Endothelial cell of umbilical vein (primary cell): ENCODE measurements at regions of chr2 and their contacts with region 1.

Region 1: GRCh38 chr2:10709290-10709939 is 12.0 kb upstream of the ATP6V1C2 start:
- DNase-seq: peak; percentile 38
- H3K4me3 ChIP-seq: no peak overlapping the region
- H3K27ac ChIP-seq: no peak overlapping the region
- H3K4me1 ChIP-seq: peaks cover 5% of the 10 kb centered on the region
- H3K27me3 ChIP-seq: peaks cover 3 to 6% of the 10 kb centered on the region in 2 experiments
- CTCF ChIP-seq: peak in 1 of 2 donors; percentile 67
- POLR2A ChIP-seq: no peak

Region 2: DNA sequence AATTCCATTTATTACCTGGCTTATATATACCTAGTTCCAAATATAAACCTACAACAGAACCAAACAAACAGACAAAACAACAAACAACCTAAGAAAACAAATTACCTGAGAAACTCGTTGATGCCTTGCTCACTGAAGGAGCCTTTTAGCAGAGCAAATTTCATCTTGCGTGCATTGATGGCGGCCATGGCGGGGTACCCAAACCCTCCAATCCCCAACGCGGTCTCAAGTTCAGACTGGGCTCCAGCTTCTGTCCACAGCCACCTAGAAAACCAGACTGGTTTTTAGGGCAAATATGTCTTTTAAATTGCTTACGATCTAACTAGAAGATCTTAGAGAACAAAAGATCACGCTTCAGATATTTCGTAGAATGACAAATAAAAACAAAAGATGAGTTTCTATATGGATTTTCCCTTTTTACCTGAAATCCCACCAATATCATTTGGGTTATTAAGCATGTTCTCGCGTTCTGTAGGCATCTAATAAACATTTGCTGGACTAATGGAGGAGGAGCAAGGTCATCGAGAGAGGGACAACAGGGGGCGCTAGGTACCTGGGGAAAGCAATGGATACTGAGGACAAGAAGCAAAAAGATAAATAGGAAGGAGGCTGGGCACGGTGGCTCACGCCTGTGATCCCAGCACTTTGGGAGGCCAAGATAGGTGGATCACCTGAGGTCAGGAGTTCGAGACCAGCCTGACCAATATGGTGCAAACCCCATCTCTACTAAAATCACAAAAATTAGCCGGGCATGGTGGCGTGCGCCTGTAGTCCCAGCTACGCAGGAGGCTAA is 78.0 kb after region 1 on chr2:
- CTCF ChIA-PET with region 1: interaction called, 3 read pairs
- POLR2A ChIA-PET with region 1: no interaction called
- dilution Hi-C with region 1: no loop called
- intact Hi-C with region 1: loop called (anchors 2 kb)
- DNase-seq: peak; percentile 26
- H3K4me3 ChIP-seq: no peak overlapping the region
- H3K27ac ChIP-seq: no peak overlapping the region
- H3K4me1 ChIP-seq: peaks cover 14% of the 10 kb centered on the region
- H3K27me3 ChIP-seq: no peaks in the 10 kb centered on the region
- CTCF ChIP-seq: peak; percentile 20 to 34
- POLR2A ChIP-seq: no peak